Uterus (tissue), 4 donors: ENCODE measurements at regions of chr7 and their contacts with region 1.

Region 1: DNA sequence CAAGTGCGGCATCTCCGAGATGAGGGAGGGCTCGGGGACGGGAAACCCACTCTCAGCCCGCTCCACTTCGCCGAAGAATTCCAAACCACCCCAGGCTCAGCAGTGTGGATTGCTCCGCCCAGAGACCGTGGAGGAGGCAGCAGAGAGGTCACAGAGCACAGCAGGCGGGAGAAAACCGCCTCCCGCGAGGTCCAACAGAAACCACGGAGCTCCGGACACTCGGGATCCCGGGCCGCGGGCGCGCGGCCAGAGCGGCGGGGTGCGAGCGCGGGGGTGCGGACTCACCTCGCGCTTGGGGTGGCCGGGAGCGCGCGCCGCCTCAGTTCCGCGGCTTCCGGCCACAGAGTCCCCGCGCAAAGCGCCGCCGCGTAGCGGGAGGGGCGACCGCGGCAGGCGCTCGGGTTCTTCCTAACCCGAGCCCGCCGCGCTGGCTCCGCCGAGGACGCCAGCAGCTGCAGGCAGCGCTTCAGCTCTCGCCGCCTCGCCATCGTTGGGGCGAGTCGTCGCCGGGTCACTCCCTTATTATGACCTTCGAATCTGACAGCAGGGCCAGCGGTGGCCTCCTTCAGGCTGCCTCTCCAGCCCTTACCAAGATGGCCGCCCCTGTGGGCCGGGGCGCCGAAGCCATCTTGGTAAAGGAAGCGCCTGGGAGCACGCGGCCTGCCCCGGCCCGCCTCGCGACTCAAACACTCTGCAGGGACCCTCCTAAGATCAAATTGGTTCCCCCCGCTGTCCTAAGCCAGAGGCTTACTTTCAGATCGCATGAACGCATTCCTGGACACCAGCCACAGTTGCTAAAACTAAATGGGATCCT is at the start of gene NAPEPLD:
- DNase-seq: peak; percentile 83 to 86
- H3K4me3 ChIP-seq: peak within 1 kb of the TSS; percentile 65 to 74
- H3K27ac ChIP-seq: peak within 1 kb of the TSS; percentile 89 to 95
- H3K4me1 ChIP-seq: no peaks in the 10 kb centered on the region
- H3K27me3 ChIP-seq: no peaks in the 10 kb centered on the region
- CTCF ChIP-seq: no peak
- POLR2A ChIP-seq: peak; percentile 28 to 54
- total RNA-seq, gene NAPEPLD: 11.0 to 79.4 (median 31.1) TPM

Region 2: DNA sequence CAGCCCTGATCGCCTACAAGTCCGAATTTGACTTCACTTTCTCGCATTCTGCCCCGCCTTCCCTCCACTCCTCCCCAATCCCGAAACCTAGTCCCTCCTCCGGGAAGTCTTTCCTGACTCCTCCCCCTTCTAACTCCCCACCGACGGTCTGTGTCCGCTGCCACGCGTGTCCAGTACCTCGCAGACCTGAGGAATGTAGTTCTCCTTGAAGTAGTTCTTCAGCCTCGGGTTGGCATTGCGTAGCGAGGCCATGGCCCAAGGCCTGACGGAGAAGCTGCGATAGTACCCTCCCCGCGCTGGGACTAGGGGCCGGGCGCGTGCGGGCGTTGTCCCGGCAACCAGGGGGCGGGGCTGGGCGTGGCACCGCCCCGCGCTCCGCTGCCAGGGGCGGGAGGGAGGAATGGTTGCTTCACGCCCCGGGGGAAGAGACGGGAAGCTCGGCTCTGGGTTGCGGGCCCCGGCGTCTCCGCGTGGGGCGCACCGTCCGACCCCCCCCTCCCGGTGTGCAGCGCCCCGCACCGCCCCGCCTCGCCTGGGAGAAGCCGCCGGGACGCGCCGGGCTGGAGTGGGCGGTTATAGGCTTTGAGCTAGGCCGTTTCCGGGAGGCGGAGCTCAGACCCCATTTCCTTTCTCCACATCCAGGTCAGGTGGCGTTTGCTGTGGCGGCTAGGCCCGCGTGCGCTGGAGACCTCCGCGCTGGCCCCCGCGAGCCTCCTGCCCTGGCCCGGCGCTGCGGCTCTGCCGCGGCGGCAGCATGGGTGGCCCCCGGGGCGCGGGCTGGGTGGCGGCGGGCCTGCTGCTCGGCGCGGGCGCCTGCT is 74.5 kb before region 1 on chr7 and contains the starts of genes ARMC10 and FBXL13:
- intact Hi-C with region 1: loop called (anchors 10 kb)
- DNase-seq: peak; percentile 89 to 94
- H3K4me3 ChIP-seq: peak within 1 kb of the TSS; percentile 63 to 88
- H3K27ac ChIP-seq: peak within 1 kb of the TSS; percentile 74 to 94
- H3K4me1 ChIP-seq: no peaks in the 10 kb centered on the region
- H3K27me3 ChIP-seq: no peaks in the 10 kb centered on the region
- CTCF ChIP-seq: peak in 2 of 4 experiments; percentile 42 to 59
- POLR2A ChIP-seq: peak in 1 of 2 donors; percentile 64
- total RNA-seq, gene ARMC10: 47.0 to 66.1 (median 57.2) TPM
- total RNA-seq, gene FBXL13: 1.2 to 12.9 (median 5.5) TPM